GM18951 (cell line): ENCODE measurements at regions of chr22 and their contacts with region 1.

Region 1: GRCh38 chr22:37330200-37331033 is 48.1 kb downstream of the CYTH4 start:
- POLR2A ChIP-seq: no peak

Region 2: GRCh38 chr22:37148742-37149665 is 181.4 kb before region 1 on chr22:
- in situ Hi-C with region 1: no loop called
- POLR2A ChIP-seq: no peak

Region 3: GRCh38 chr22:37383341-37383740 is 52.9 kb after region 1 on chr22:
- in situ Hi-C with region 1: loop called (anchors 10 kb)
- POLR2A ChIP-seq: no peak

Region 4: DNA sequence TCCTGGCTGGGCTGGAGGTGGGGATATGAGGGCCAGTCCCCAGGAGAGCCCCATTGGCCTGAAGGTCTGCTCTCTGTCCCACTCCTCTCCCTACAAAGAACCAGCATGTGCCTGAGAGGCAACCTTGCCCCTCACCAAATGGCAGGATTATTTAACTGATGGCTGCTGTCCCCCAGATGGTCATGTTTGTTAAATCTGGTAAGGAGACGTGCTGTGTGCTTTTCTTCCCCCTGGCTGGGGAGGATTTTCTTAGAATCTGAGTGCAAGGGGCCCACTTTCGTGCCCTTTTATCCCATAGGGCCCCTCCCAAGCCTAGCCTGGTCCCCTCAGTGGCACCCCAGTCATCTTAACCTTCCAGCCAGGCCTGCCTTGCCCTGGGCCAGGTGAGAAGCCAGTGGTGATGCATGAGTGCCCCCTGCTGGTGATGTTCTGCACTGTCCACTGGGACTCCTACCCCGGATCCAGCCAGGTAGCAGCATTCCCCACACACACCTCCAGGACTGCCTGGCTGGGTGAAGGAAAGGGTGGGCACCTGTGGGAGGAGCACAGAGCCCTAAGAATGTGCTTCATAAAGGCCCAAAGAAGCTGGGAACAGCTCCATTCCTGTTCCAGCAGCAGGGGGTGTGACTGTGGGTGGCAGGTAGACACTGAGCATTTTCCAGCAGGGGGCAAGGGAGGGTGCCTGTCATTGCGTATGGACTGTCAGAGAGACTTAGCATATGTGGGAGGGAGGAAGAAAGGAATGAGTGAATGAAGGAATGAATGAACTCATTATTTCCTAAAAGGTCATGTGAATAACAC is 126.9 kb after region 1 on chr22:
- in situ Hi-C with region 1: loop called (anchors 10 kb)
- POLR2A ChIP-seq: no peak

Region 5: GRCh38 chr22:37467391-37467955 is 137.1 kb after region 1 on chr22:
- in situ Hi-C with region 1: no loop called
- POLR2A ChIP-seq: no peak

Region 6: GRCh38 chr22:37486224-37486845 is 155.9 kb after region 1 on chr22 and contains the start of gene MFNG:
- in situ Hi-C with region 1: no loop called
- POLR2A ChIP-seq: peak; percentile 78

Region 7: GRCh38 chr22:37581504-37581903 is 251.1 kb after region 1 on chr22:
- in situ Hi-C with region 1: loop called (anchors 10 kb)
- POLR2A ChIP-seq: no peak

Region 8: GRCh38 chr22:37696657-37697537 is 366.5 kb after region 1 on chr22 and contains the start of gene TRIOBP:
- in situ Hi-C with region 1: no loop called
- POLR2A ChIP-seq: no peak